CD4-positive, alpha-beta T cell (primary cell): ENCODE measurements at regions of chr22 and their contacts with region 1.

Region 1: DNA sequence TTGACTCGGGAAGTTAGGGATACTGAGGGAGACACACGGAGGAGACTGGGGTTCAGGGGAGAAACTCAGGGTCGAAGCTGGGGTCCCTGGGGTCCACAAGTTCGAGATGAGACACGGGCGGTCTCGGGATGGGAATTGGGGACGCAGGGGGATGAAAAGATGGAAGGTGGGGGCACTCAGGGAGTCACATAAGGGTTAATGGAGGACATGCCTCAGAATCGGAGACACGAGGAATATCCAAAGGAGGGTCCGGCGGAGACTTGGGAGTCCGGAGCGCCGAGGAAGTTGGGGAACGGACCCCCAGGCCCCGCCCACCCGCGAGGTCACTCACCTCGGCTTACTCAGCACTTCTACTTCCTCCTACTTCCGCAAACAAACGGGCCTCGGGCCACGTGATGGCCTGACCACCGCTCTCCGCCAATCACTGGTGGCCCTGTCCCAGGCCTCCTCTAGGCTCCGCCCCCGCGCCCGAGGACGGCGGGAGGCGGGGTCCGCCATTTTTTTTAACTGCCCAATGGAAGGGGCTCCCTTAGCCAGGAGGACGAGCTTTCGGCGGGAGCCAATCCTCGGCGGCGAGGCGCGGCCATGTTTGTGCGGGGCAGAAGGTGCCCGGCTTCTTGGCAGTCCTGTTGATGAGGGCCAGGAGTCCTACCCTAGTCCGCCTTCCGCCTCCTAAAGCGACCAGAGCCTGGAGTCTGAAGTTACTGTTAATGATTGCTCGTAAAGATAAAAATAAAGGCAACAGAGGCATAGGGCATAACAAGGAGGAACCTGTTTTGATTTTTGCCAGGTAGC is at the start of gene PLA2G6:
- DNase-seq: peak; percentile 89 to 98 (median 94)
- ATAC-seq: peak; percentile 94
- H3K4me3 ChIP-seq: peak within 1 kb of the TSS; percentile 76
- H3K4me3 Mint-ChIP-seq: peak within 1 kb of the TSS; percentile 94
- H3K27ac ChIP-seq: peak within 1 kb of the TSS; percentile 75 to 77
- H3K27ac Mint-ChIP-seq: peak within 1 kb of the TSS; percentile 89
- H3K4me1 ChIP-seq: peaks cover 27% of the 10 kb centered on the region
- H3K4me1 Mint-ChIP-seq: peaks cover 31% of the 10 kb centered on the region
- H3K27me3 ChIP-seq: no peaks in the 10 kb centered on the region
- H3K27me3 Mint-ChIP-seq: no peaks in the 10 kb centered on the region
- CTCF ChIP-seq: no peak
- total RNA-seq, gene PLA2G6: 48.8 to 50.2 TPM

Region 2: DNA sequence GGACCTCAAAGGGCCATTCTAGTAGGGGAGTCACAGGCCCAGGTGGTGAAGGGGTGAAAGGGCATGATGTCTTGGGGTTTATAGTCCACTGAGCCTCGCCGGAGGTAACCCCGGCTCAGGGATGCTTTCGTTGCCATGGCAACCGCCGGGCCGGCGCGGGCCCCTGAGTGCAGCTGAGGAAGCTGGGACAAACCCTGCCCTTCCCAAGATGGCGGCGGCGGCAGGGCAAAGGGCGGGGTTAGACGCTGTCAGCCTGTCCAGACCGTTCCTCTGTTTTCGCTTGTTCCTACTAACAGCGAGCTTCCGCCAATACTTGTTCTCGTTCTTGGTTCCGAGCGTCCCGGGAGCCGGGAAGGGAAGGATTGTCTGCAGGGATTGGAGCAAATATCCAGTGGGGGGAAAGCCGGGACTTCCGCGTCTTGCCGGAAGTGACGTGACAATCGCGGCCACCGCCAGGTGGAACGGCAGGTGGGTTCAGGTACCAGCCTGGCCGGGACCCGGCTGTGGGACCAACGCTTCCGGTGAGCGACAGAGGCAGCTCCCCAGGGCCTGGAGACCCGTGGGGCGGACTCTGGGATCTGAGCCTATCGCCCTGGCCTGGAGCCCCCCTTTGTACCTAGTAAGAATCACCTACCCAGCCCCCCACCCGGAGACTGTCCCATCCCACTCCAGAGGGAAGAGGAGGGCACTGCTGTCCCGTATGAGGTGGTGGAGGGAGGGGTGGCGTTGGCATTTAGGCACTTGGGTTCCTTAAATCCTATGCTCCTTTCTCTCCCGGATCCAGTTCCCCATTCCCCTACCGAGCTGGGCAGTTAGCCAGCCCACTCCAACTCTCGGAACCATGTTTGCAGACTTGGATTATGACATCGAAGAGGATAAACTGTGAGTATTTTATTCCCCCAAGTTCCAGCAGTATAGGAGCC is 124.4 kb before region 1 on chr22 and contains the start of gene PICK1:
- CTCF ChIA-PET with region 1: no interaction called
- POLR2A ChIA-PET with region 1: no interaction called
- intact Hi-C with region 1: loop called in 1 of 2 experiments (anchors 5 kb)
- DNase-seq: peak; percentile 56 to 92 (median 74)
- ATAC-seq: peak; percentile 84
- H3K4me3 ChIP-seq: peak within 1 kb of the TSS; percentile 91
- H3K4me3 Mint-ChIP-seq: peak within 1 kb of the TSS; percentile 98
- H3K27ac ChIP-seq: peak within 1 kb of the TSS; percentile 84 to 94
- H3K27ac Mint-ChIP-seq: peak within 1 kb of the TSS; percentile 99
- H3K4me1 ChIP-seq: peaks cover 27% of the 10 kb centered on the region
- H3K4me1 Mint-ChIP-seq: peaks cover 20% of the 10 kb centered on the region
- H3K27me3 ChIP-seq: no peaks in the 10 kb centered on the region
- H3K27me3 Mint-ChIP-seq: no peaks in the 10 kb centered on the region
- CTCF ChIP-seq: no peak
- total RNA-seq, gene PICK1: 21.2 to 25.6 TPM

Region 3: DNA sequence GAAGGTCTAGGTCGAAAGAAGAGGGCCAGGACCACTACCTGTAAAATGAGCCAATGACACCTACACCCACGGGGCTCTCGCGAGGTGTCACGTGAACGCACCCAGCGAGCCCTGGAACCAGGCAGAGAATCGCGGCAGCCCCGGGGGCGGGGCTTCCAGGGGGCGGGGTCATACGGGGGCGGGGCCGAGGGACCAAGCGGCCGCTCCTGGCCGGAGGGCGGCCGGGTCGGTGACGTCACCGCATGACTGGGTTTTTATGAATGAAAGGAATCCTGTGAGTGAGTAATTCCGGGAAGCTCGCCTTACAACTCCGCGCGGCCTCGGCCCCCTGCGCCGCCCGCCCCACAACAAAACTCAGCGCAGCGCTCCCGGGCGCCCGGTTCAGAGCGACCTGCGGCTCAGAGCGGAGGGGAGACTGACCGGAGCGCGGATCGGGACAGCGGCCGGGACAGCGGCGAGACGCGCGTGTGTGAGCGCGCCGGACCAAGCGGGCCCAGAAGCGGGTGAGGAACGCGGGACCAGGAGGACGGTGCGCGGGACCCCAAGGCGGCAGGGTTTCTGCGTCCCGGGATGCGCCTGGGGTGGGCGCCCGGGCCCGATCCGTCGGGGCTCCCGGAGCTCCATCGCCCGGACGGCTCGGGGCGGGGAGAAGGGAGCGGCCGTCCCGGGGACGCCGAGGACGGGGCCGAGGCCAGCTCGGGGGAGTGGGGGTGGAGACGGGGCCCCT is 20.2 kb after region 1 on chr22 and contains the start of gene MAFF:
- CTCF ChIA-PET with region 1: interaction called, 7 read pairs
- POLR2A ChIA-PET with region 1: interaction called, 39 read pairs
- intact Hi-C with region 1: loop called (anchors 1 to 2 kb)
- DNase-seq: peak; percentile 65 to 96 (median 80)
- ATAC-seq: peak; percentile 74
- H3K4me3 ChIP-seq: peak within 1 kb of the TSS; percentile 83
- H3K4me3 Mint-ChIP-seq: peak within 1 kb of the TSS; percentile 90
- H3K27ac ChIP-seq: peak within 1 kb of the TSS; percentile 82
- H3K27ac Mint-ChIP-seq: peak within 1 kb of the TSS; percentile 87
- H3K4me1 ChIP-seq: peaks cover 37% of the 10 kb centered on the region
- H3K4me1 Mint-ChIP-seq: peaks cover 26% of the 10 kb centered on the region
- H3K27me3 ChIP-seq: no peaks in the 10 kb centered on the region
- H3K27me3 Mint-ChIP-seq: no peaks in the 10 kb centered on the region
- CTCF ChIP-seq: no peak
- total RNA-seq, gene MAFF: 25.6 to 27.3 TPM

Region 4: GRCh38 chr22:38214256-38215056 is 32.8 kb after region 1 on chr22:
- CTCF ChIA-PET with region 1: interaction called, 3 read pairs
- POLR2A ChIA-PET with region 1: interaction called, 6 read pairs
- intact Hi-C with region 1: loop called in 1 of 2 experiments (anchors 5 kb)
- DNase-seq: peak; percentile 51 to 90 (median 72)
- ATAC-seq: peak; percentile 82
- H3K4me3 ChIP-seq: peak overlapping the region; percentile 51
- H3K4me3 Mint-ChIP-seq: peak overlapping the region; percentile 45
- H3K27ac ChIP-seq: no peak overlapping the region
- H3K27ac Mint-ChIP-seq: peak overlapping the region; percentile 55
- H3K4me1 ChIP-seq: peaks cover 34% of the 10 kb centered on the region
- H3K4me1 Mint-ChIP-seq: peaks cover 29% of the 10 kb centered on the region
- H3K27me3 ChIP-seq: no peaks in the 10 kb centered on the region
- H3K27me3 Mint-ChIP-seq: no peaks in the 10 kb centered on the region
- CTCF ChIP-seq: no peak

Region 5: GRCh38 chr22:38272373-38273134 is 90.9 kb after region 1 on chr22 and contains the start of gene TMEM184B:
- CTCF ChIA-PET with region 1: no interaction called
- POLR2A ChIA-PET with region 1: interaction called, 4 read pairs
- intact Hi-C with region 1: loop called (anchors 5 kb)
- DNase-seq: peak; percentile 65 to 95 (median 80)
- ATAC-seq: peak; percentile 93
- H3K4me3 ChIP-seq: peak within 1 kb of the TSS; percentile 89
- H3K4me3 Mint-ChIP-seq: peak within 1 kb of the TSS; percentile 95
- H3K27ac ChIP-seq: peak within 1 kb of the TSS; percentile 77 to 90
- H3K27ac Mint-ChIP-seq: peak within 1 kb of the TSS; percentile 95
- H3K4me1 ChIP-seq: peaks cover 50% of the 10 kb centered on the region
- H3K4me1 Mint-ChIP-seq: peaks cover 55% of the 10 kb centered on the region
- H3K27me3 ChIP-seq: no peaks in the 10 kb centered on the region
- H3K27me3 Mint-ChIP-seq: no peaks in the 10 kb centered on the region
- CTCF ChIP-seq: no peak
- total RNA-seq, gene TMEM184B: 49.3 to 50.1 TPM

Region 6: DNA sequence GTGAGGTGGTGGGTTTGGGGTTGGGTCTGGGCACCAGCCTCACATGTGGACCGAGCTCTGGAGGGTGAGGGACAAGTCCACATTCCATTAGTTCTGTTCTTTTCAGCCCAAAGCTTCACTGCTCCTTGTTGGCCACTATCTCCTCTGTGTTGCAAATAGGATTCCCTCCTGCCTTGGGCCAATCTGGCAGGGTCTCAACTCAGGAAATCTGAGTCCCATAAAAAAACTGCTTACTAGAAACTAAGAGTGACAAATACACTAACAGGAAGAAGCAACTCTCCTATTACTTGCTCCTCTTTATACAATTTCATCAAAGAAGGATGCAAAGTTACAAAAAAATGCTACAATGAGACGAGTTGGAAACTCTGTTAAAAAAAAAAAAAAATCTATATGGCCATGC is 201.8 kb after region 1 on chr22:
- CTCF ChIA-PET with region 1: no interaction called
- POLR2A ChIA-PET with region 1: no interaction called
- intact Hi-C with region 1: no loop called
- DNase-seq: no peak
- ATAC-seq: no peak
- H3K4me3 ChIP-seq: no peak overlapping the region
- H3K4me3 Mint-ChIP-seq: no peak overlapping the region
- H3K27ac ChIP-seq: no peak overlapping the region
- H3K27ac Mint-ChIP-seq: no peak overlapping the region
- H3K4me1 ChIP-seq: no peaks in the 10 kb centered on the region
- H3K4me1 Mint-ChIP-seq: peaks cover 7% of the 10 kb centered on the region
- H3K27me3 ChIP-seq: no peaks in the 10 kb centered on the region
- H3K27me3 Mint-ChIP-seq: no peaks in the 10 kb centered on the region
- CTCF ChIP-seq: no peak

Region 7: DNA sequence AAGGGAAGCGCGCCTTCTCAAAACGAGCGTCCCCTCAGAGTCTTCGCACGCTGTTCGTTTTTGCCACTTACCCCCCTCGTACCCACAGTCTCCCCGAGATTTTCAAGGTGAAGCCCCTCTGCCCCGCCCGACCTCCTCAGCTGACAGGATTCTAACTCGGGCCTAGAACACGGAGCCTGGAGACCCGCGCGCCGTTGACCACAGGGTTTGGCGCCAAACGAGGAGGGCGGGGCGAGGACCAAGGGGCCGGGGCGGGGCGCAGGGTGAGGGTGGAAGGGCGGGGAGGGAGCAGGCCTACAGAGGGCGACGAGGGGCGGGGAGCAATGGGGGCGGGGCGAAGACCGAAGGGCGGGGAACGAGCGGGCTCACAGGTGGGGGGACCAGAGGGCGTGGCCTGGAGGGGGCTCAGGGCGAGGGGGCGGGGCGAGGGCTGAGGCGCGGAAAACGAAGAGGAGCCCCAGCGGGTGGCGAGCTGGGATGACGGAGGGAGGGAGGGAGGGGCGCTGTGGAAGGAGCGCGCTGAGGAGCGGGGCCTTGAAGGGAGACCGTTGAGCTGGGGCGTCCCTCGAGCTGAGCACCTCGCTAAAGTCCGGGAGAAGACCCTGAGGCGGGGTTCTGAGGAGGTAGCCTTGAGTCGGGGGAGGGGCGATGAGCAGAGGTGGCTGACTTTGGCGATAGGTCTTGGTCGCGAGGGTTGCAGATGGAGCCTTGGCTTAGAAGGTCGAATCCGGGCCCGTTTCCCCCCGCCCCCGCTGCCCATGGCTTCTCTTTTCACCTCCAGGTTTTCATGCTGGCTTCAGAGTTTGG is 388.5 kb after region 1 on chr22 and contains the start of gene DMC1:
- CTCF ChIA-PET with region 1: no interaction called
- POLR2A ChIA-PET with region 1: no interaction called
- intact Hi-C with region 1: loop called (anchors 5 to 10 kb)
- DNase-seq: peak; percentile 93 to 100 (median 97)
- ATAC-seq: peak; percentile 92
- H3K4me3 ChIP-seq: peak within 1 kb of the TSS; percentile 89
- H3K4me3 Mint-ChIP-seq: peak within 1 kb of the TSS; percentile 90
- H3K27ac ChIP-seq: peak within 1 kb of the TSS in 1 of 2 donors; percentile 44
- H3K27ac Mint-ChIP-seq: peak within 1 kb of the TSS; percentile 80
- H3K4me1 ChIP-seq: peaks cover 20% of the 10 kb centered on the region
- H3K4me1 Mint-ChIP-seq: peaks cover 17% of the 10 kb centered on the region
- H3K27me3 ChIP-seq: no peaks in the 10 kb centered on the region
- H3K27me3 Mint-ChIP-seq: no peaks in the 10 kb centered on the region
- CTCF ChIP-seq: no peak
- total RNA-seq, gene DMC1: 0.52 to 0.95 TPM